Activated T-helper 2 cell treated with anti-CD3 and anti-CD28 coated beads, Interferon-gamma antibody, Interleukin-2, Interleukin-4, amounts not matched to agents 10 μg/mL and 5 μg/mL and 100 μg/mL, durations not matched to agents 14 hours and 24 hours and 36 hours (primary cell): ENCODE measurements at regions of chr6 and their contacts with region 1.

Region 1: GRCh38 chr6:170554013-170554795 is at the start of gene TBP:
- DNase-seq: peak; percentile 96
- H3K4me3 Mint-ChIP-seq: no peak within 1 kb of the TSS
- H3K27ac Mint-ChIP-seq: no peak within 1 kb of the TSS
- H3K4me1 Mint-ChIP-seq: peaks cover 34% of the 10 kb centered on the region
- H3K27me3 Mint-ChIP-seq: no peaks in the 10 kb centered on the region
- total RNA-seq, gene TBP: 26.4 and 27.8 TPM in 2 replicates

Region 2: GRCh38 chr6:169723200-169723909 is 830.8 kb before region 1 on chr6:
- intact Hi-C with region 1: loop called (anchors 2 kb)
- DNase-seq: peak; percentile 59
- H3K4me3 Mint-ChIP-seq: peak overlapping the region; percentile 97
- H3K27ac Mint-ChIP-seq: peak overlapping the region; percentile 97
- H3K4me1 Mint-ChIP-seq: peaks cover 38% of the 10 kb centered on the region
- H3K27me3 Mint-ChIP-seq: peaks cover 2% of the 10 kb centered on the region

Region 3: DNA sequence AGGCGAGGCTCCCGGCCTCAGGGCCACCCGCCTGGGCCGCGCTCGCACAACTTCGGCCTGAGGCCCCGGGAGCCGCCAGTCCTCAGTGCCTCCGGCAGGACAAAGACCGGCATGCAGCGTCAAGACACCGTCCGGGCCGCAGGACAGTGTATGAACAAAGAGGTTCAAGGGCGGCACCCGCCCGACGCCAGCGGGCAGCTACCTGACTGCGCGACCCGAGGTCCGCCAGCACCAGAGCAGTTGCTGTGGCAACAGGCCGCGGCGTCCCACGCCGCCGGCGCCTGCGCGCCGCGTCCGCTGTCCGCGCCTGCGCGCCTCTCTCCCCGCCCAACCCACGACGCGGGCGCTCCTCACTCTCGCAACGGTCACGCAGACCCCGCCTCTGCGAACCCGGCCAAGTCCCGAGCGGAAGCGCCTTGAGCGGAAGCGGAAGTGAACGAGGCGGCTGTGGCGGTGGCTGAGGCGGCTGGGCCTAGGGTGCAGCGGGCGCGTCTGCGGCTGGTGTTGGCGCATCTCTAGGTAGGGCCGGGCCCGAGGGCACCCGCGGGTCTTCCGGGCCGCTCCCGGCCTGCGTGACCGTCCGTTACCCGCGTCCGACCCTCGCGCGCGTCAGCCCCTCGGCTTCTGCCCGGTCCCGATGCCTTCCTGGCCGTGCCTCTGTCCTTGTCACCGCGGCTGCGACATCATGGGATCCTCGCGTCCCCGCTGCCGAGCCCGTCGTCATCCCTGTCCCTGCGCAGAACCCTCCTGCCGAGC is 247.7 kb before region 1 on chr6 and contains the start of gene FAM120B:
- intact Hi-C with region 1: loop called (anchors 2 kb)
- DNase-seq: peak; percentile 96
- H3K4me3 Mint-ChIP-seq: peak within 1 kb of the TSS; percentile 95
- H3K27ac Mint-ChIP-seq: peak within 1 kb of the TSS; percentile 91
- H3K4me1 Mint-ChIP-seq: peaks cover 23% of the 10 kb centered on the region
- H3K27me3 Mint-ChIP-seq: peaks cover 25% of the 10 kb centered on the region
- total RNA-seq, gene FAM120B: 19.6 and 21.8 TPM in 2 replicates

Region 4: GRCh38 chr6:170480050-170480692 is 74.0 kb before region 1 on chr6:
- intact Hi-C with region 1: no loop called
- DNase-seq: no peak
- H3K4me3 Mint-ChIP-seq: no peak overlapping the region
- H3K27ac Mint-ChIP-seq: no peak overlapping the region
- H3K4me1 Mint-ChIP-seq: no peaks in the 10 kb centered on the region
- H3K27me3 Mint-ChIP-seq: peaks cover 7% of the 10 kb centered on the region

Region 5: DNA sequence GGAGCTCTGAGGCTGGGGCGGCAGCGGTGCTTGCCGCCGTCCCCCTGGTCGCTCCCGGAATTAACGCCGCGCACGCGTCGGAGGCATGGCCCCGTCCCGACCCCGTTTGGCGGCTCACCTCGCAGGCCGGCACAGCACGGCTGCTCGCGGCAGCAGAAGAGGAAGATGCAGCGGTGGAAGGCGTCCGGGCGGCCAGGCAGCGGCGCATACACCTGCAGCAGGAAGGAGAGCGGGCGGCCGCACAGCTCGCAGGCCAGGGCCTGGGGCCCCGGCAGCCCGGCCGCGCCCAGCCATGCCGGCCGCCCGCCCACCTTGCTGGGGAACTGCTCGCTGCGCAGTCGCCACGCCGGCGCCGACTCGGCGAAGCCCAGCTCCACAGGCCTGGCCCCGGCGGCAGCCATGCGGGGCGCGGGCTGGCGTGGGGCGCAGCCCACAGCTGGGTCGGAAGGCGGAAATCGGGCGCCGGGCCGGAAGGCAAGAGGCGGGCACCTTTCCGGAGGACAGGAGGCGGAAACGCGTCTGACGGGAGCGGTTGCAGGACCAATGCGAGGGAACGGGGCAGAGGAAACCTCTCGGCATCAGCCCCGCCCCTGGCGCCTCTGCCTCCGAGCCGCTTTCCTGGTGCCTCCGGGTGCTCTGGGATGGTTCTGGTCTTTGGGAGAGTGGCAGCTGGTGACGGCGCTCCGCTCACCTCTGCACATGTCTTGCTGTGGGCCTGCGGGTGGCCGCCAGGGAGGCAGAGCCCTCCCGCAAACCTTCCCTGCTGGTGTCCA is 30.2 kb after region 1 on chr6 and contains the start of gene PDCD2:
- intact Hi-C with region 1: loop called (anchors 1 kb)
- DNase-seq: peak; percentile 89
- H3K4me3 Mint-ChIP-seq: peak within 1 kb of the TSS; percentile 99
- H3K27ac Mint-ChIP-seq: peak within 1 kb of the TSS; percentile 90
- H3K4me1 Mint-ChIP-seq: peaks cover 28% of the 10 kb centered on the region
- H3K27me3 Mint-ChIP-seq: peaks cover 3% of the 10 kb centered on the region
- total RNA-seq, gene PDCD2: 117 and 124 TPM in 2 replicates